Activated naive CD4-positive, alpha-beta T cell treated with anti-CD3 and anti-CD28 coated beads for 36 hours (primary cell): ENCODE measurements at regions of chr1 and their contacts with region 1.

Region 1: DNA sequence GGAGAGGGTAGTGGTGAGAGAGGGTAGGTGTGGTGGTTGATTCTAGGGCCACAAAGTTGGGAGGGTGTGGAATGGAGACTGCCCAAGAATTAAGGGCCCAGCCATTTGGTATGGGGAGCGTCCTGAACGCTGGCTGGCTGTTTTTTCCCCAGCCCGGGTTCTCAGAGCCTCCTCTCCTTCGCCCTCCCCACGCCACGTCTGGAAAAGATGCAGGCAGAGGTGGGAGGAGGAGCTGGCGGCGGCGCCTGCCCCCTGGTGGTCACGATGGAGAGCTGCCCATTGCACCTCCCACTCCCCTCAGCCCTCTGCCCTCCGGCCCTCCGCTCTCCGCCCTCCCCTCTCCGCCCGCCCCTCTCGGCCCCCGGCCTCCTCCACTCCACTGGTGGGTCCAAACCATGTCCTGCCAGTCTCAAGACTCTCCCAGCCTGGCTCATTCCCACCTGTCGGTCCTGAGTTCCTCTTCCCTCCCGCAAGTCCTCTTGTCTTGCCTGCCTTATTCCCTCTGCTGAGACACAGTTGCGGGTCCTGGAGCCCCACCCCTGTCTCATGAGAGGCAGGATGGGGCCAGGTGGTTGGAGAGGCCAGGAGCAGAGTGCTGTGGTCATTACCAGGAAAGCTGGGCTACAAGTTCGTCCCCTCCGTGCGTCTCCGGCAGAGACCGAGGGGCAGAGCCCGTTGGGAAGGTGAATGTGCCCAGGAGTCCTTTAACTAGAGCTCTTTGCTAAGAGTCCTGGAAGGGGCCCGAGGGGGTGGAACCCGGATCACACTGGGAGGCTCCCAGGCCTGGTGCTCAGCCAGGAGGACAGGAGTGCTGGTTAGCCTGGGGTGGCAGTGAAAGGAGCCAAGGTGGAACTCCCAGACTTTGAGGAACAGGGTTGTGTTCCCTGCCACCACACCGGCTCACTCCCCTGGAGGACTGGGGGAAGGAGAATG is 22.6 kb downstream of the ETNK2 start:
- DNase-seq: peak; percentile 64
- H3K4me3 Mint-ChIP-seq: no peak overlapping the region
- H3K27ac Mint-ChIP-seq: no peak overlapping the region
- H3K4me1 Mint-ChIP-seq: peaks cover 7% of the 10 kb centered on the region
- H3K27me3 Mint-ChIP-seq: no peaks in the 10 kb centered on the region

Region 2: GRCh38 chr1:203038891-203039608 is 1090.2 kb before region 1 on chr1:
- CTCF ChIA-PET with region 1: no interaction called
- intact Hi-C with region 1: no loop called
- DNase-seq: peak; percentile 82
- H3K4me3 Mint-ChIP-seq: no peak overlapping the region
- H3K27ac Mint-ChIP-seq: no peak overlapping the region
- H3K4me1 Mint-ChIP-seq: no peaks in the 10 kb centered on the region
- H3K27me3 Mint-ChIP-seq: peaks cover 2% of the 10 kb centered on the region

Region 3: GRCh38 chr1:203504397-203505250 is 624.6 kb before region 1 on chr1:
- CTCF ChIA-PET with region 1: no interaction called
- intact Hi-C with region 1: loop called (anchors 2 kb)
- DNase-seq: peak; percentile 91
- H3K4me3 Mint-ChIP-seq: no peak overlapping the region
- H3K27ac Mint-ChIP-seq: no peak overlapping the region
- H3K4me1 Mint-ChIP-seq: peaks cover 6% of the 10 kb centered on the region
- H3K27me3 Mint-ChIP-seq: no peaks in the 10 kb centered on the region

Region 4: DNA sequence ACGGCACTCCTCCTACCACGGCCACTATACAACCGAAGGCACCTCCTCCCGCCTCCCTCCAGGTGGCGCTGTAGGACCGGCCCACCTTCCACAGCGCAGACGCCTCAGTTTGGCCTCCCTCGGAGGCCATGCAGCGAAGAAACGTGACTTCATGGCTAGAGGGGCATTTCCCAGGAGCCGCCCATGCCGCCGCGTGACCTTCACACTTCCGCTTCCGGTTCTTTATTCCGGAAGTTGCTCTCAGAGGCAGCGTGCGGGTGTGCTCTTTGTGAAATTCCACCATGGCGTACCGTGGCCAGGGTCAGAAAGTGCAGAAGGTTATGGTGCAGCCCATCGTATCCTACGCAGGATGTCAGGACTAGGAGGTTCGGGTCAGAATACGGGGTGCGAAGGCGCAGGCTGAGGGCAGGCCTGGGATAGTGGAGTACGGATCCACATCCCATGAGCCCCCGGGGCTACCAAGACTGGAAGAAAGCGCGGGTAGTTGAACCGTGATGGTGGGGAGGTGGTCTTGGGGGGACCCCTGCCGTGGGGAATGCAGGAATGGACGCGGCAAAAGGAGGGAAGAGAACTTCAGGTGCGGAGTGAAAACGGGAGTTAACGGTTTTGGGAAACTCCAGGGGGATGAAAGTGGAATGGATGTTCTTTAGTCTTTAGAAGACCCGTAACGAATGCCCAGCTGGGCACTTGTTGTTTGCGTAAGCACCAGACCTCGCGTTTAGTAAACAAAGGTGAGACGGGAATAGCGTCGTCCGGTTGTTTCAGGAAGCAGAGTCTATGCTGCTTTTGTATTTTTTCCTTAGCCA is 267.6 kb before region 1 on chr1 and contains the start of gene SNRPE:
- CTCF ChIA-PET with region 1: interaction called, 41 read pairs
- intact Hi-C with region 1: loop called (anchors 1 kb)
- DNase-seq: peak; percentile 98
- H3K4me3 Mint-ChIP-seq: peak within 1 kb of the TSS; percentile 100
- H3K27ac Mint-ChIP-seq: peak within 1 kb of the TSS; percentile 95
- H3K4me1 Mint-ChIP-seq: peaks cover 25% of the 10 kb centered on the region
- H3K27me3 Mint-ChIP-seq: no peaks in the 10 kb centered on the region
- total RNA-seq, gene SNRPE: 366 to 370 TPM

Region 5: DNA sequence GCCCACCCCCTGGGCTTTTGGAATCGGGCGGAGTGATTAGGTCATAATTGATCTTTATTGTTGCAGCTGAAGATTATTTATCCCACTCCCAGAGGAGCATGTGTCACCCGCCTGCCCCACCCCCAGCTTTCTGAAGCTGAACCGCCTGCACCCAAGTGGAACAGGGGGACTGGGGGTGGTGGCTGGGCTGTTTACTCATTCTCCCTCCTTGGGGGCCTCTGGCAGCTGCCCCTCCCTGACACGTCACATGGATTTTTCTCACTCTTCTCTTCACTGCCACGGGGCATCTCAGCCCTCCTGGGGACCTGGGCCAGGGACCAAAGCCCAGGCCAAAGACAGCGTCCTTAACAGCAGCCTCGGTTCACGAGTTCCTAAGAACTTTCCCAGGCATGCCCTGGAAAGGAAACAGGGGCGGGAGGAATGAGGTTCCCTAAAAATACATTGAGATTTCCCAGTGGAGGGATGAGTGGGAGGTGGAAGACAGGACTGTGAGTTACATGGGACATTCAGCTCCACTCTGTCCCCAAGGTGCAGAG is 87.9 kb before region 1 on chr1:
- CTCF ChIA-PET with region 1: no interaction called
- intact Hi-C with region 1: loop called (anchors 10 kb)
- DNase-seq: no peak
- H3K4me3 Mint-ChIP-seq: no peak overlapping the region
- H3K27ac Mint-ChIP-seq: no peak overlapping the region
- H3K4me1 Mint-ChIP-seq: no peaks in the 10 kb centered on the region
- H3K27me3 Mint-ChIP-seq: peaks cover 4% of the 10 kb centered on the region

Region 6: GRCh38 chr1:204114606-204115005 is 14.6 kb before region 1 on chr1:
- CTCF ChIA-PET with region 1: interaction called, 16 read pairs
- intact Hi-C with region 1: no loop called
- DNase-seq: no peak
- H3K4me3 Mint-ChIP-seq: no peak overlapping the region
- H3K27ac Mint-ChIP-seq: no peak overlapping the region
- H3K4me1 Mint-ChIP-seq: no peaks in the 10 kb centered on the region
- H3K27me3 Mint-ChIP-seq: no peaks in the 10 kb centered on the region